ENCODE measurements at regions of chr19 and their contacts with region 1.

Region 1: DNA sequence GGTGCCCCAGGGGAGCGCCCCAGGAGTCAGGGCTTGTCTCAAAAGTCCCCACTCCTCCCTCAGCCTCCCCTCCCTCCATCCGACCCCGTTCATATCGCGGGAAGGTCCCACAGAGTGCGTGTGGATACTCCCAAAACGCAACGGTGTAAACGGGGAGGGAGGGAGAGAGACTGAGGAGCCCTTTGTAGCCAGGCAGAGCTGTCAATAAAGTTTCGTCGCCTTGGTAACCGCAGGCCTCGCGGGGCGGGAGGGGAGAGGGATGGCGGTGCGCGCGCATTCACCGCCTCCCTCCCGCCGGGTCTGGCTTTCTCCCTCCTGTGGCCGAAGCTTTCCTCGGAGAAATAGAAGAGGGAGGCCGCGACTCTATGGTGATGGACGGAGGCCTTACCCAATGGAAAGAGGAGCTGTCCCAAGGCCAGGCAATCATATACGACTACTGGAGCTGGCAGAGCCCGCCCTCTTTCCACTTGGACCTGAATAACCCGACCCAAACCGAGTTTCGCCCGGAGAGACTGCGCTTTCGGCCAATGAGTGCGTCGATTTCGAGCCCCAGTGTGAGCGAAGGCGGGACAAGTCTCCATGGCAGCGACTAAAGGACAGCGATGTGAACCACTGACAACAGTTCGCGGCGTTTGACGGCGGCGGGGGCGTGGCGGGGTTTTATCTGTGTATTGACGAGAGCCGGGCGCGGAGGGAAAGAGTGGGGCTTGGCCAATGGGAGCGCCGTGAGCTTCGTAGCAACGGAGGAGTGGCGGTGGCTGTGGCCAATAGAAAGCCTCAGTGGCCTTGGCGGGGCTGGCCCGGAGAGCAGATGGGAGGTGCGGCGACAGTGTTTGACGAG is at the start of gene KMT5C:
- DNase-seq: peak; percentile 100
- ATAC-seq: peak; percentile 86
- H3K4me3 Mint-ChIP-seq: peak within 1 kb of the TSS; percentile 86
- H3K27ac Mint-ChIP-seq: peak within 1 kb of the TSS; percentile 97
- H3K4me1 Mint-ChIP-seq: peaks cover 18% of the 10 kb centered on the region
- H3K27me3 Mint-ChIP-seq: peaks cover 2% of the 10 kb centered on the region
- total RNA-seq, gene KMT5C: 27.5 to 32.3 TPM

Region 2: GRCh38 chr19:54448774-54449700 is 890.2 kb before region 1 on chr19 and contains the start of gene LENG8:
- CTCF ChIA-PET with region 1: no interaction called
- POLR2A ChIA-PET with region 1: no interaction called
- intact Hi-C with region 1: loop called in 1 of 2 experiments (anchors 2 kb)
- DNase-seq: peak; percentile 98
- ATAC-seq: peak; percentile 92
- H3K4me3 Mint-ChIP-seq: peak within 1 kb of the TSS; percentile 98
- H3K27ac Mint-ChIP-seq: peak within 1 kb of the TSS; percentile 98
- H3K4me1 Mint-ChIP-seq: peaks cover 36% of the 10 kb centered on the region
- H3K27me3 Mint-ChIP-seq: no peaks in the 10 kb centered on the region
- total RNA-seq, gene LENG8: 156 to 221 TPM

Region 3: DNA sequence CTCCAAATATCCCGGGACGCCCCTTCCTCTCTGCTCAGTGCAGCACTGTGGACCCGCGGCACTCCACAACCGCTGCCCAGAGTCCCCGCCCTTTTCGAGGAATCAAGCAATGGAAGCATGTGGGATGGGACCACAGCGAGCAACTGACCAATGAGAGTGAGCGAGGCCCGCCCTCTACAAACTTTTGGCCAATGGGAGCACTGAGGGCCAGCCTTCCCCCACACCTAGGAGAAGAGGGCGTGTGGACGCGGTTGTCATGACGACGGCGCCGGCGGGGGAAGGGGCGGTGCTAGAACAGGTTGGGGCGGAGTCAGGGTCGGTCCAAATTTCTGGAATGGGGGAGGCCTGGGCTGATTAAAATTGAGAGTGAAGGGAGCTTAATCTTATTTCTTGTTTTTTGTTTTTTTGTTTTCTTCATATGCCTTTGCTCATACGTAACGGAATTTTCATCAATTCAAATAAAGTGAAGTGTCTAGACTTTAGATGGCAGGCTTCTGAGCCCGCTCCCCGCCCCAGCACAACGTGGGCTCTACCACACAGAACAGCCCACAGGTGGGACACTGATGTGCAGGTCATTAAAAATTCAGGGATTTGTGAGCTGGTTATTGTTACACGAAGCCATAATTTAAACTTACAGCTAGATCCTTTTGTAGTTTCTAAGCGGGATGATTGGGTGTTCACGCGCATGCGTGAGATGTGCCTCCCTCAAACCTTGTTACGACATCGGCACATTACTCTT is 172.6 kb before region 1 on chr19 and contains the start of gene DNAAF3:
- CTCF ChIA-PET with region 1: interaction called, 3 read pairs
- POLR2A ChIA-PET with region 1: no interaction called
- intact Hi-C with region 1: loop called in 1 of 2 experiments (anchors 1 kb)
- DNase-seq: peak; percentile 95
- ATAC-seq: peak; percentile 95
- H3K4me3 Mint-ChIP-seq: peak within 1 kb of the TSS; percentile 71
- H3K27ac Mint-ChIP-seq: peak within 1 kb of the TSS; percentile 11
- H3K4me1 Mint-ChIP-seq: peaks cover 10% of the 10 kb centered on the region
- H3K27me3 Mint-ChIP-seq: peaks cover 45% of the 10 kb centered on the region
- total RNA-seq, gene DNAAF3: 0.53 to 0.72 TPM

Region 4: GRCh38 chr19:55301459-55302317 is 37.6 kb before region 1 on chr19:
- CTCF ChIA-PET with region 1: interaction called, 3 read pairs
- POLR2A ChIA-PET with region 1: interaction called, 3 read pairs
- intact Hi-C with region 1: loop called (anchors 1 to 5 kb)
- DNase-seq: peak; percentile 97
- ATAC-seq: peak; percentile 90
- H3K4me3 Mint-ChIP-seq: peak overlapping the region; percentile 81
- H3K27ac Mint-ChIP-seq: peak overlapping the region; percentile 90
- H3K4me1 Mint-ChIP-seq: peaks cover 6% of the 10 kb centered on the region
- H3K27me3 Mint-ChIP-seq: no peaks in the 10 kb centered on the region

Region 5: GRCh38 chr19:55319785-55320184 is 19.5 kb before region 1 on chr19:
- CTCF ChIA-PET with region 1: no interaction called
- POLR2A ChIA-PET with region 1: no interaction called
- intact Hi-C with region 1: no loop called
- DNase-seq: no peak
- ATAC-seq: peak; percentile 49
- H3K4me3 Mint-ChIP-seq: no peak overlapping the region
- H3K27ac Mint-ChIP-seq: no peak overlapping the region
- H3K4me1 Mint-ChIP-seq: no peaks in the 10 kb centered on the region
- H3K27me3 Mint-ChIP-seq: peaks cover 5% of the 10 kb centered on the region

Region 6: GRCh38 chr19:55407800-55408532 is 68.7 kb after region 1 on chr19:
- CTCF ChIA-PET with region 1: no interaction called
- POLR2A ChIA-PET with region 1: interaction called, 9 read pairs
- intact Hi-C with region 1: loop called (anchors 1 kb)
- DNase-seq: peak; percentile 98
- ATAC-seq: peak; percentile 96
- H3K4me3 Mint-ChIP-seq: peak overlapping the region; percentile 90
- H3K27ac Mint-ChIP-seq: peak overlapping the region; percentile 96
- H3K4me1 Mint-ChIP-seq: peaks cover 22% of the 10 kb centered on the region
- H3K27me3 Mint-ChIP-seq: no peaks in the 10 kb centered on the region

Region 7: GRCh38 chr19:55605207-55605636 is 266.0 kb after region 1 on chr19:
- CTCF ChIA-PET with region 1: interaction called, 4 read pairs
- POLR2A ChIA-PET with region 1: no interaction called
- intact Hi-C with region 1: loop called in 1 of 2 experiments (anchors 1 kb)
- DNase-seq: peak; percentile 100
- ATAC-seq: peak; percentile 87
- H3K4me3 Mint-ChIP-seq: peak overlapping the region; percentile 88
- H3K27ac Mint-ChIP-seq: peak overlapping the region; percentile 96
- H3K4me1 Mint-ChIP-seq: peaks cover 57% of the 10 kb centered on the region
- H3K27me3 Mint-ChIP-seq: no peaks in the 10 kb centered on the region

Region 8: DNA sequence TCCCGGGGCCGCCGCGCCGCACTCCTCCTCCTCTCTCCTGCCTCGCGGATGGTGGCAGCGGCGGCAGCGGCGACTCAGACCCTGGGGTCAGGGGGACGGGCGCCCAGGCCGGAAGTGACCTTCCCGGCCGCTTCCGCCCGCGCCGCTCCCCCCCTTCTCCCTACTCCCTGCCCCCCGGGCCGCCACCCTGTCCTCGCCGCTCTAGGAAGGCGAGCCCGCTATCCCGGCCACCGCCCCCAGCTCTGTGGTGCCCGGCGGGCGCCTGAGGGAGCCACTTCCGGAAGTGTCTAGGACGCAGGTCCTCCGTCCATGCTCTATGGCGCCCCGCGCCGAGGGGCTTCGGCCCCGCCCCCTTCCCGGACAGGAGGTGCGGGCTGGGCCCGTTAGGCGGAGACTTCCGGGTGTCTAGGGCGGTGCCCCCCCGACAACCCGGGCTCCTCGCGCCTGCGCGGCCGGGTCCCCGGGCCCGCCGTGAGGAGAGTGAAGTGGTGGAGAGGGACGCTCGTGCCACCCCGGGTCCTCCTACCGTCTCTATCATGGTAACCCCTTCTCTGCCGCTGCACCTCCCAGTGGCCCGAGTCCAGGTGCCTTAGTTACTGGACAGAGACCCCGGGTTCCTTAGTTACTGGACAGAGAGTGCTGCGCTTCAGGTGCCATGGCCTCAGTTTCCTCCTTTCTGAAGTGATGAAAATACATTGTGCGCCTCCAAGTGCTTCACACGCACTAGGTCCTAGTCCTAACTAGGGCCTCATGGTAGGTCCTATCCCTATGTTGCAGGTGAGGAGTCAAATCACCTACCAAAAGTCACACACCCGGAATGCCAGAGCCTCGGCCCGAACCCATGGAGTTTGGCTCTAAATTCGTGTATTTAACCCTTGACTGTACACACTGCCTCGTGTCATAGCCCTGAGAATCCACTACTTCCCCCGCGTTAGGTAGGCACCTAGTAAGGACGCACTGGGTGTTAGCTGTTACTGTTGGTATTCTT is 782.2 kb after region 1 on chr19 and contains the start of gene ZNF787:
- CTCF ChIA-PET with region 1: no interaction called
- POLR2A ChIA-PET with region 1: no interaction called
- intact Hi-C with region 1: loop called in 1 of 2 experiments (anchors 1 kb)
- DNase-seq: peak; percentile 98
- ATAC-seq: peak; percentile 92
- H3K4me3 Mint-ChIP-seq: peak within 1 kb of the TSS; percentile 82
- H3K27ac Mint-ChIP-seq: peak within 1 kb of the TSS; percentile 91
- H3K4me1 Mint-ChIP-seq: peaks cover 48% of the 10 kb centered on the region
- H3K27me3 Mint-ChIP-seq: no peaks in the 10 kb centered on the region
- total RNA-seq, gene ZNF787: 27.6 to 28.4 TPM